ENCODE measurements at regions of chr10 and their contacts with region 1.

Region 1: GRCh38 chr10:112314822-112315474 is 31.7 kb downstream of the TECTB start:
- DNase-seq: peak; percentile 65 to 83 (median 75)
- ATAC-seq: peak; percentile 80 to 91 (median 89)
- H3K4me3 ChIP-seq: no peak overlapping the region
- H3K27ac ChIP-seq: no peak overlapping the region
- H3K4me1 ChIP-seq: no peaks in the 10 kb centered on the region
- H3K27me3 ChIP-seq: peaks cover 0 to 7% (median 0%) of the 10 kb centered on the region in 9 donors
- CTCF ChIP-seq: peak; percentile 79 to 95 (median 88)
- POLR2A ChIP-seq: no peak

Region 2: DNA sequence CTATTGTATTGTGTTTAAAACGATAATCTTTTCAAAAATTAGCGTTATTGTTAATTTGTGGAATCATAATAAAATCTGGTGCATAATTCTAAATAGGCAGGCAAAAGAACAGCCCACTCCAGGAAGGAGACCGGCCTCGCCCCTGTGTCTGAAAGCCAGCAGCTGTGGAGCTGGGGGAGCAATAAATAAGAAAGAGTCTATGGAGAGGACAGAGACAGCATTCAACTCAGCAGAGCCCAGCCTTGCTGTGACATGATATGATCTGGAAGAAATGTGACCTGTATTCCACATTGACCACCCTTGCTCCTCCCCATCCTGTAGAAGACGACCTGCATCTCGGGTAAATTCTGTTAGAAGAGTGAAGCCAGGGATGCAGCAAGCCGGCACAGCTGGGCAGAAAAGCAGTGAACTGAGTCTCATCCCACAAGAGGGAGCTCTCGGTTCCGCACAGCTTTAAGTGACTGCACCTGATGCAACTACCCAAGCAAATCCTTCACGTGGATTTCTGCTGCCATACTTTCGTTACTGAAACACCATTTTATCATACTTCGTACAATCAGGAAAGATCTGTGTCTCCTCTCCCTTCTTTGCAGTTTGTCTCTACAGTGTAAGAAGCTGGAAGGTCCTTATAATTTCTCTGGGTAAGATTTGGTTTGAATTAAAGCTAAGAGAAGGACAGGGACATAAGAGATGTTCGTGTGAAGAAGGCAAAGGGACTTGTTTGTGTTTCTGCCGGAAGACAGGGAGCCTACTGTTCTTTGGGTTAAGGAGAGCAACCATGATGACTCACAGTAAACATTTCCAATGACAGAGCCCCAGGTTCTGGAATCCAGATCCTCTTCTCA is 558.5 kb before region 1 on chr10:
- intact Hi-C with region 1: loop called in 6 of 10 experiments (anchors 5 to 10 kb)
- DNase-seq: peak in 2 of 5 donors; percentile 23 to 27
- ATAC-seq: peak in 1 of 4 donors; percentile 55
- H3K4me3 ChIP-seq: no peak overlapping the region
- H3K27ac ChIP-seq: no peak overlapping the region
- H3K4me1 ChIP-seq: no peaks in the 10 kb centered on the region
- H3K27me3 ChIP-seq: peaks cover 0 to 2% (median 0%) of the 10 kb centered on the region in 9 donors
- CTCF ChIP-seq: peak in 9 of 12 donors; percentile 28 to 55 (median 38)
- POLR2A ChIP-seq: no peak

Region 3: DNA sequence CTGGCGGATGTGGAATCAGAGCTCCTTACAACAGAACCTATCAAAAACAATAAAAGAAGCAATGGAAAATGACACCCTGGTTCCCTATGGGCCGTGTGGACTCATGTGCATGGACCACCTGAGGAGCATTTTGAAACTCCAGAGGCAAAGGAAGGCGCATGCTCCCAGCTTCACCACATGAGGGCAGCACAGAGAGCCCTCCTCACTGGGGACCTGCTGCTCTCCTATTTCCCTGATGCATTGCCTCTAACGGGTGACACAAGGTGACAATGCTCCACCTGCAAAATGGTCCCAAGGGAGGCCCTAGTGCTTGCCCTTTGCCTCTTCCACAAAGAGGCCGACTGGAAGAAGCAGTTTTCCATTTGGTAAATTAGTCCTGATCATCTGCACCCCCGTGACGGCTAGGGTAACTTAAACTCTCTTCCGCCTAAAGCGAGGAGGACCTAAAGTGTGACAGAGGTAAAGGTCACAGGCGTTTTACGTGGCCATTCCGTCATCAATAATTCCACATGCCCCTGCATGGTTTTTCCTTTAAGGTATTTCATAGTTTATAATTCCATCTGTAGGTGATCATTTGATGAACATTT is 199.1 kb before region 1 on chr10:
- intact Hi-C with region 1: loop called in 3 of 10 experiments (anchors 5 to 10 kb)
- DNase-seq: peak in 1 of 5 donors; percentile 36
- ATAC-seq: peak in 1 of 4 donors; percentile 16
- H3K4me3 ChIP-seq: no peak overlapping the region
- H3K27ac ChIP-seq: no peak overlapping the region
- H3K4me1 ChIP-seq: no peaks in the 10 kb centered on the region
- H3K27me3 ChIP-seq: no peaks in the 10 kb centered on the region
- CTCF ChIP-seq: peak; percentile 45 to 76 (median 59)
- POLR2A ChIP-seq: no peak

Region 4: DNA sequence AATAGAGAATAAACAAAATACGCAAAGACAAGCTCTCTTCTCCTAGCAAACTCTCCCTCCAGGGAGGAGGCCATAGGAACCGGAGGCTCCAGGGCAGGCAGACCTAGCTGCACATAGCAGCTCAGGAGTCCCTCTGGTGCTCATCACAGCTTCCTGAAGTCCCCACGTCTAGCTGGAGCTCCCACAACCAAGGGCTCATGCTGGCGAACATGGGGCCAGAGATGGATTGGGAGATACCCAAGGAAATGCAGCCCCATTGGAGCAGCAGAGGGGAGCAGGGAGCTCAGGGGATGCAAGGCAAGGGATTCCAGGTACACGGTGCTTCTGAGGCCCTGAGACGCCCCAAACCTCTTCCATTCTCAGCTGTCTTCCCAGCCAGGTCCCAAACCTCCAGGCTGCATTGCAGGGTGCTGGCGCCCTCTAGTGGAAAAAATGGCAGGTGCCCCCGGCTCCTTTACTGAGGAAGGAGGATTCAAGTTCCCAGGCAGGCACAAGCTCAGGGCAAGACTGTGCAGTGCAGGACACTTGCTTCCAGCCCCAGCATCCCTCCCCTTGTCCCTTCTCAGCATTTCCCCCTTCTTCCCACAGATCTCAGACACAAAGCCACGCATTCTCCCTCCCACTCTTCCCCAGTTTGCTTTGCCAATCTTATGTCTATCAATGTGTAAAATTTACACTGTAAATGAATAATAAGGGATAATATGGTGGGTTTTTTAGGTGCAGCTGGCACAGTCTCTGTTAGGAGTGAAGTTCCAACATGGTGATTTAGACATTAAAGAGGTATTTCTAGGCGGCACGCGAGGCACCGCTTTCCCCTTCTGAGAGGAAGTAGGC is 177.6 kb before region 1 on chr10:
- intact Hi-C with region 1: loop called in 3 of 10 experiments (anchors 5 to 10 kb)
- DNase-seq: peak; percentile 44 to 84 (median 65)
- ATAC-seq: peak; percentile 58 to 79 (median 70)
- H3K4me3 ChIP-seq: no peak overlapping the region
- H3K27ac ChIP-seq: no peak overlapping the region
- H3K4me1 ChIP-seq: peaks cover 0 to 4% (median 0%) of the 10 kb centered on the region in 12 donors
- H3K27me3 ChIP-seq: no peaks in the 10 kb centered on the region
- CTCF ChIP-seq: peak; percentile 72 to 95 (median 88)
- POLR2A ChIP-seq: no peak

Region 5: GRCh38 chr10:112195224-112195623 is 119.7 kb before region 1 on chr10:
- intact Hi-C with region 1: loop called in 1 of 10 experiments (anchors 10 kb)
- DNase-seq: no peak
- ATAC-seq: no peak
- H3K4me3 ChIP-seq: no peak overlapping the region
- H3K27ac ChIP-seq: no peak overlapping the region
- H3K4me1 ChIP-seq: no peaks in the 10 kb centered on the region
- H3K27me3 ChIP-seq: no peaks in the 10 kb centered on the region
- CTCF ChIP-seq: no peak
- POLR2A ChIP-seq: no peak

Region 6: GRCh38 chr10:112227331-112227987 is 87.5 kb before region 1 on chr10:
- intact Hi-C with region 1: no loop called
- DNase-seq: no peak
- ATAC-seq: no peak
- H3K4me3 ChIP-seq: no peak overlapping the region
- H3K27ac ChIP-seq: no peak overlapping the region
- H3K4me1 ChIP-seq: no peaks in the 10 kb centered on the region
- H3K27me3 ChIP-seq: no peaks in the 10 kb centered on the region
- CTCF ChIP-seq: no peak
- POLR2A ChIP-seq: no peak

Region 7: DNA sequence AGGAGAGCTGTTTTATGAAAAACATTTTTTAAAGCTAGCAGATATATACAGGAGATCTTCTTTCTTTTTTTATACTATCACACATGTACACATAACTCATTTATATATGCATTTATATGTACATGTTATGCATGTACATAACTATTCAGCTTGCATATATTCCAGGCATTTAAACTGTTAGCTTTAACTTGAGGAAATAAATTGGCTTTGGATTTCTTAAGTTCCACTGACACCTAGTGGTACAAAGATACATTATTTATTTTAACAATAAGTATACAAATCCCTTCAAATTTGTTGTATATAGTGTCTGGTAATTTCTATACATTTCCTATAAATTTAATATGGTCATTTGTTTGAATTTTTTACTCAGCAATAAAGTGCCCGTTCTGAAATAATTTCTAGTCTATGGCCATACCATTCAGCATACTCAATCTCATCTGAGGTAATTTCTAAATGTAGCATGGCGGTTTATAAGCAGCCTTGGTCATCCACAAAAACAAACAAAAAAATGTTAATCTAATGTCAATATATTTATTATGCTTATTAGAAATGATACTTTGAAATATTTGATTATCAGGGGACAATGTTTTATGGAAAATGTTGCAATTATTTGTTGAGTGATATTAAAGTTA is 120.2 kb after region 1 on chr10:
- intact Hi-C with region 1: loop called in 7 of 10 experiments (anchors 2 to 10 kb)
- DNase-seq: no peak
- ATAC-seq: no peak
- H3K4me3 ChIP-seq: no peak overlapping the region
- H3K27ac ChIP-seq: no peak overlapping the region
- H3K4me1 ChIP-seq: no peaks in the 10 kb centered on the region
- H3K27me3 ChIP-seq: no peaks in the 10 kb centered on the region
- CTCF ChIP-seq: peak; percentile 26 to 73 (median 48)
- POLR2A ChIP-seq: no peak